ENCODE measurements at regions of chr11 and their contacts with region 1.

Region 1: DNA sequence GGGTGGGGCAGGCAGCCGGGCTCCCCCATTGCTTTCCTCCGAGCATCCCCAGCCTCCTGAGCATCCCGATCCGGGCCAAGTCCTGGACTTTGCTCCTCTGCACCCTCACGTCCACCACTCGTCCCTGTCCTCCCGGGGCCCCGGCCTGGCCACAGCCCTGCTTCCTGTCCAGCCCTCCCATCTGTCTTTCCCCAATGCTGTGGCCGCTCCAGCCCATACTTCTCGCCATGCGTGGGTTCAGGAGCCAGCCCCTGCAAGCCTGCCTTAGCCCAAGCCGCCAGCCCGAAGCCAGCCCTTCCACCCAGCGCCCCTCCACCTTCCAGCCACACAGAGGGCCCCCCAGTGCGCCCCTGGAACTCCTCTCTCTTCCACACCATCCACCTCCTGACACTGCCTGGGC is 23.8 kb downstream of the MRPL23 start:
- DNase-seq: no peak
- H3K4me3 ChIP-seq: no peak overlapping the region
- H3K27ac ChIP-seq: no peak overlapping the region; a peak in 1 of 4 replicates
- H3K4me1 ChIP-seq: no peaks in the 10 kb centered on the region
- H3K27me3 ChIP-seq: no peaks in the 10 kb centered on the region
- CTCF ChIP-seq: no peak
- EP300 ChIP-seq: no peak
- RAD21 ChIP-seq: no peak

Region 2: DNA sequence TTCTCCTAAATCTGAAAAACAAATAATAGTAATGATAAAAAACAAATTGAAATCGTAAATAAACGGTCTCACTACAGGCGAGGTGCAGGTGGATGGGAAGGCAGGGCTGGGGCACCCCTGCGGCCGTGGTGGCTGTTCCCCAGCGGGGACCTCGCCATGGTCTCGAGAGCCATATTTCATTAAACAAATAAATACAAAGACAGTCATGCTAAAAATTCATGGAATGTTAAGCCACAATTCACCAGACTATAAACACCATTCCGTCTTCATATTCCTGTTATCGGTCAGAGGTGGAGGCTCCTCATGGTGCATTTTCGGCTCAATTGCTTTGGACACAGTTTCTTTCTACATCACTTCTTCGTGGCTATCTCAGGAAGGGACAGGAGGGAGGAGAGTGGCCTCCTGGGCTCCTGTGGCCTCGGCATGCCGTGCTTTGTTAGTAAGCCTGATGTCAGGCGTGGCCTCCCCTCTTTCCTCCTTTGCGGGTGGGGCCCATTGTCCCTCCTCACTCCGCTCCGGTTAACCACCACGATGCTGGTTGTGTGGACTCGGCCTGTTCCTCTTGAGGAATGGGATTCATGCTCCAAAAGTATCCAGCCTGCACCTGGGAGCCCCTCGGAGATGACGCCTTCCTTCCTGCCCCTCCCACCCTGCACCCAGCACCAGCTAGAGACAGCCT is 597.3 kb before region 1 on chr11:
- CTCF ChIA-PET with region 1: no interaction called
- POLR2A ChIA-PET with region 1: no interaction called
- DNase-seq: peak; percentile 11
- H3K4me3 ChIP-seq: no peak overlapping the region
- H3K27ac ChIP-seq: no peak overlapping the region
- H3K4me1 ChIP-seq: no peaks in the 10 kb centered on the region
- H3K27me3 ChIP-seq: no peaks in the 10 kb centered on the region
- CTCF ChIP-seq: no peak
- EP300 ChIP-seq: no peak
- RAD21 ChIP-seq: no peak

Region 3: DNA sequence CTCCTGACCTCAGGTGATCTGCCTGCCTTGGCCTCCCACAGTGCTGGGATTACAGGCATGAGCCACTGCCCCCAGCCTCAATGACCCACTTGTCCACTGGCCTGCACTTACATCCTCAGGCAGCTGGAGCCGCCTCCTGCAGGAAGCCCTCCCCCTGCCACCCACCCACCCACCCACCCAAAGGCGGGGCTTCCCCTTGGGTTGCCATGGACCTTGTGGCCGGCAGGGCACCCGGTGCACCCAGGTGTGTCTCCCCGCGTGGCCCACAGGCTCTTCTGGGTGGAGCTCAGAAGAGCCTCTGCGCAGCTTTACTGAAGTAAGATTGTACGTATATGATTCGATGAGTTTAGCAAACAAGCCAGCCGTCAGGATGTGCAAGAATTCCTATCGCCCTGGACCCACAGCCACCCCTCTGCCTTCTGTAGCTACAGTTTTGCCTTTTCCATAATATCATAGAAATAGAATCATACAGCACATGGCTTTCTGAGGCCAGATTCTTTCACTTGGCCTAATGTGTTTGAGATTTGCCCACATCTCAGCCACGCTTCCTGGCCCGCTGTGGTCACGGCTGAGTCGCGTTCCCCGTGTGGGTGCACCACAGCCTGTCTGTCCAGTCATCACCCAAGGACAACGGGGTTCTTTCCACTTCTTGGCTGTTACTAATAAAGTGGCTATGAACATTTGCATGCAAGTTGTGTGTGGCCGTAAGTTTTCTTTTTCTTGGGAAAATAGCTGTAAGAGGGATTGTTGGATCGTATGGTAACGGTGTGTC is 586.6 kb before region 1 on chr11:
- CTCF ChIA-PET with region 1: no interaction called
- POLR2A ChIA-PET with region 1: no interaction called
- DNase-seq: no peak
- H3K4me3 ChIP-seq: no peak overlapping the region
- H3K27ac ChIP-seq: no peak overlapping the region
- H3K4me1 ChIP-seq: peaks cover 0 to 19% of the 10 kb centered on the region in 2 experiments; a peak in 1 of 4 replicates
- H3K27me3 ChIP-seq: no peaks in the 10 kb centered on the region
- CTCF ChIP-seq: no peak
- EP300 ChIP-seq: no peak
- RAD21 ChIP-seq: no peak

Region 4: GRCh38 chr11:1946812-1947484 is 24.0 kb before region 1 on chr11 and contains the start of gene MRPL23:
- CTCF ChIA-PET with region 1: interaction called, 33 read pairs
- POLR2A ChIA-PET with region 1: interaction called, 6 read pairs
- DNase-seq: no peak
- H3K4me3 ChIP-seq: no peak within 1 kb of the TSS
- H3K27ac ChIP-seq: no peak within 1 kb of the TSS
- H3K4me1 ChIP-seq: peaks cover 0 to 15% of the 10 kb centered on the region in 2 experiments; a peak in 1 of 4 replicates
- H3K27me3 ChIP-seq: no peaks in the 10 kb centered on the region
- CTCF ChIP-seq: no peak
- EP300 ChIP-seq: no peak
- RAD21 ChIP-seq: no peak
- polyA plus RNA-seq, gene MRPL23: 226 and 264 TPM in 2 replicates

Region 5: GRCh38 chr11:2012440-2012839 is 41.5 kb after region 1 on chr11:
- CTCF ChIA-PET with region 1: no interaction called
- POLR2A ChIA-PET with region 1: no interaction called
- DNase-seq: no peak
- H3K4me3 ChIP-seq: no peak overlapping the region
- H3K27ac ChIP-seq: no peak overlapping the region
- H3K4me1 ChIP-seq: no peaks in the 10 kb centered on the region
- H3K27me3 ChIP-seq: no peaks in the 10 kb centered on the region
- CTCF ChIP-seq: no peak
- EP300 ChIP-seq: no peak
- RAD21 ChIP-seq: no peak